ENCODE measurements at regions of chr9 and their contacts with region 1.

Region 1: DNA sequence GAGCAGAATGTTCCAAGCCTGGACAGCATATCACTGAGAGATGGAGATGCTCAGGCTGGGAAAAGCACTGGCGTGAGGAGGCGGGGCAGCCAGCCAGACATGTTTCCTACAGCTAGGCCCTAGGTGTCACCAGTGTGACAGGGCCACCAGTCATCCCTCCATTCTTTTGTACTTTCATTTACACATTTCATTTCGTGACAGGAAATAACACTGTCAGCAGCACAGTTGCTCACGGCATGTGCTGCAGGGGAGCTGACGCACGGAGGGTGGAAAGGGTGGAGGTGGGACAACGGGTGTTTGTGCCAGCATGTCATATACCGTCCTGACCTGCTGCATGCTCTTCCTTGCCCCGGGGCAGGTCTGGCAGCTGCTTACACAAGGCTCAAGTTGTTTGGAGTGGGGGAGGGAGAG is 14.8 kb upstream of the CEMIP2 start:
- DNase-seq: peak; percentile 78
- ATAC-seq: peak; percentile 94
- H3K4me3 Mint-ChIP-seq: peak overlapping the region; percentile 84
- H3K27ac Mint-ChIP-seq: peak overlapping the region; percentile 100
- H3K4me1 Mint-ChIP-seq: peaks cover 37% of the 10 kb centered on the region
- H3K27me3 Mint-ChIP-seq: peaks cover 2% of the 10 kb centered on the region

Region 2: GRCh38 chr9:71608825-71609452 is 174.2 kb before region 1 on chr9:
- POLR2A ChIA-PET with region 1: no interaction called
- DNase-seq: no peak
- ATAC-seq: no peak
- H3K4me3 Mint-ChIP-seq: no peak overlapping the region
- H3K27ac Mint-ChIP-seq: no peak overlapping the region
- H3K4me1 Mint-ChIP-seq: peaks cover 3% of the 10 kb centered on the region
- H3K27me3 Mint-ChIP-seq: peaks cover 10% of the 10 kb centered on the region

Region 3: GRCh38 chr9:71768388-71769174 is 14.5 kb before region 1 on chr9 and contains the start of gene CEMIP2:
- POLR2A ChIA-PET with region 1: interaction called, 57 read pairs
- DNase-seq: peak; percentile 92
- ATAC-seq: peak; percentile 80
- H3K4me3 Mint-ChIP-seq: peak within 1 kb of the TSS; percentile 93
- H3K27ac Mint-ChIP-seq: peak within 1 kb of the TSS; percentile 94
- H3K4me1 Mint-ChIP-seq: peaks cover 35% of the 10 kb centered on the region
- H3K27me3 Mint-ChIP-seq: no peaks in the 10 kb centered on the region
- total RNA-seq, gene CEMIP2: 54.1 to 55.9 TPM

Region 4: GRCh38 chr9:71795097-71795813 is 12.1 kb after region 1 on chr9:
- POLR2A ChIA-PET with region 1: interaction called, 50 read pairs
- DNase-seq: no peak
- ATAC-seq: peak; percentile 89
- H3K4me3 Mint-ChIP-seq: peak overlapping the region; percentile 84
- H3K27ac Mint-ChIP-seq: peak overlapping the region; percentile 99
- H3K4me1 Mint-ChIP-seq: peaks cover 33% of the 10 kb centered on the region
- H3K27me3 Mint-ChIP-seq: no peaks in the 10 kb centered on the region

Region 5: GRCh38 chr9:72564479-72565281 is 781.6 kb after region 1 on chr9:
- POLR2A ChIA-PET with region 1: no interaction called
- DNase-seq: no peak
- ATAC-seq: no peak
- H3K4me3 Mint-ChIP-seq: no peak overlapping the region
- H3K27ac Mint-ChIP-seq: no peak overlapping the region
- H3K4me1 Mint-ChIP-seq: peaks cover 2% of the 10 kb centered on the region
- H3K27me3 Mint-ChIP-seq: no peaks in the 10 kb centered on the region

Measured in activated naive CD8-positive, alpha-beta T cell treated with anti-CD3 and anti-CD28 coated beads, Interleukin-2, amount 10 ng/mL, durations not matched to agents 7 days and 5 days (primary cell).